ENCODE measurements at regions of chr7 and their contacts with region 1.

Region 1: DNA sequence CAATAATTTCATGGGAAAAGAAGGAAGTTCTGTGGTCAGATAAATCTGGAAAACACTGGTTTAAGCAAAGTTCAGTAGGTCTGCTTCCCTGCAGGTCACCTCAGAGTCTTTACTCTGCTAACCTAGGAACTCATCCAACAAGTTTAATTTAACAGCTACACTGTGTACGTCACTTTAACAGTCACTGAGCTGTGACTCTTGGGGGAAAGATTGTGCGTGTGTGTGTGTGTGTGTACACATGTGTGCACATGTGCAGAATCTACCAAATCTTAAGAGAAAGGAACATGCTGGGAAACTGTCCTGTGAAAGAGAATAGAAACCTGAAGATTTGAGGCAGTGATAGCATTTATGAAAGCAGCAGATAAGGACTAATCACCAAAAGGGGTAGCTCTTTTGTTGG is 62.6 kb downstream of the IKZF1 start:
- DNase-seq: no peak
- ATAC-seq: no peak
- H3K4me3 ChIP-seq: no peak overlapping the region
- H3K27ac ChIP-seq: no peak overlapping the region
- H3K4me1 ChIP-seq: no peaks in the 10 kb centered on the region
- H3K27me3 ChIP-seq: no peaks in the 10 kb centered on the region

Region 2: GRCh38 chr7:50406935-50407538 is 39.9 kb after region 1 on chr7:
- intact Hi-C with region 1: loop called in 1 of 2 experiments (anchors 1 kb)
- DNase-seq: no peak
- ATAC-seq: no peak
- H3K4me3 ChIP-seq: no peak overlapping the region
- H3K27ac ChIP-seq: no peak overlapping the region
- H3K4me1 ChIP-seq: no peaks in the 10 kb centered on the region
- H3K27me3 ChIP-seq: no peaks in the 10 kb centered on the region